RWPE1 (cell line): ENCODE measurements at regions of chr12 and their contacts with region 1.

Region 1: GRCh38 chr12:11202811-11203210 is 16.1 kb upstream of the TAS2R42 start:
- DNase-seq: no peak
- H3K27ac ChIP-seq: no peak overlapping the region
- CTCF ChIP-seq: no peak

Region 2: DNA sequence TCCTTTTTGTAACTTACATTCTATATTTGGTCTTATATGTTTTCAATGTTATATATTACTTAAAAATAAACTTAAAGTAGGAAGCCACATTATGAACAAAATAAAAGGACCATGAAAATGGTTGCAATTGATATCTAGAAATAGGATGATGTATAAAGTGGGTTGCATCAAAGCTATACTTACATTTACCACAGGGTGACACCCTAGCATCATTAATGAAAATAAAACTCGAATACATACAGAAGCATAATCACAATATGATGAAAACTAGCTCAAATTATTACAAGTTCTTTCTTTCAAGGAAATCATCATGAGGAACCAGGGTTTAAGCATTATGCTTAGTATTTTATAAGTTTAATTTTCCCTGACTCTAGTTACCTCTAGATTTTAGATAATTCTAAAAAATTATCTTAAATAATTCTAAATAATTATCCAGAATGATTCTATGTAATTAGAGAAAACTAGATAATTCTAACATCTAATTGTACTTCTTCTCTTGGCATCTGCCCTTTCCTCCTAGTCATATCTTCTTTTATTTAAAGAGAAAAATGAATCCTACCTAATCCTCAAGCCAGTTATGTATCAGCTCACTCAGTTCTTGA is 431.6 kb before region 1 on chr12:
- CTCF ChIA-PET with region 1: interaction called, 39 read pairs
- POLR2A ChIA-PET with region 1: no interaction called
- DNase-seq: peak; percentile 26
- H3K27ac ChIP-seq: no peak overlapping the region
- CTCF ChIP-seq: peak; percentile 49

Region 3: DNA sequence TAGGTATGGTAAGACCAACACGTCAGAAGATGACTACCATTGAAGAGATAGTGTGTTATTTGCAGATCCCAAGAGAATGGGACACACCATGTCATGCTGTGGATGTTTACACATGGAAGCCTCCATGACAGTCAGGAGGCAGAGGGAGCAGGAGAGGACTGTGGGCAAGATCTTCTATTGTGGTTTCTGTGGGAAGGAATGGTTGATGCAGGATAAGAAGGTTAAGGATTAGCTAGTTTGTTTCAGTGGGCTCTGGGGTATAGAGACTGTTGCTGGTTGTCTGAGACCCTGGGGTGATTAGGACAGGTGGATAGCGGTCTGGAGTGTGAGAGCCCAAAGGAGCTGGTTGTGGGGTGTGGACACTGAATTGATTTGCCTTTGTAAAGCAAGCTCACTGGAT is 423.7 kb before region 1 on chr12:
- CTCF ChIA-PET with region 1: interaction called, 26 read pairs
- POLR2A ChIA-PET with region 1: no interaction called
- DNase-seq: no peak
- H3K27ac ChIP-seq: no peak overlapping the region
- CTCF ChIP-seq: no peak

Region 4: DNA sequence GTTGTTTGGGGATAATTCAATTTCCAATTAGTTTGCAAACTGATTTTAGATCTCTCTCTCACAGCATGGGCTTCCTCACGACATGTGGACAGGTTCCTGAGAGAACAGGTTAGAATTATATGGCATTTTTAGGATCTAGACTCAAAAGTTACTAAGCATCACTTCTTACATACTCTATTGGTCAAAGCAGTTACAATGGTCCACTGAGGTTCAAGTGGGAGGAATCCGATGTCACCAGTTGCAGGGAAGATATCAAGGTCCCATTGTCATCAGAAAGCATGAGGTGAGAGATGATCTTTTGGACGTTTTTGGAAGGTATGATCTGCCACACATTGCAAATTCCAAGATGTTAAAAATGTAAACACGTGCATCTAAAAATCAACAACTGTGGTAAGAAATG is 49.3 kb after region 1 on chr12:
- CTCF ChIA-PET with region 1: no interaction called
- POLR2A ChIA-PET with region 1: no interaction called
- DNase-seq: no peak
- H3K27ac ChIP-seq: no peak overlapping the region
- CTCF ChIP-seq: no peak